ENCODE measurements at regions of chr3 and their contacts with region 1.

Region 1: GRCh38 chr3:48918388-48919214 is at the start of gene ARIH2:
- DNase-seq: peak; percentile 82 to 89 (median 88)
- ATAC-seq: peak; percentile 88
- H3K4me3 ChIP-seq: peak within 1 kb of the TSS; percentile 94
- H3K4me3 Mint-ChIP-seq: peak within 1 kb of the TSS; percentile 89 to 98 (median 96)
- H3K27ac ChIP-seq: peak within 1 kb of the TSS; percentile 98
- H3K27ac Mint-ChIP-seq: peak within 1 kb of the TSS; percentile 96 to 100 (median 99)
- H3K4me1 ChIP-seq: peaks cover 12 to 16% of the 10 kb centered on the region in 2 donors
- H3K4me1 Mint-ChIP-seq: peaks cover 7 to 31% (median 27%) of the 10 kb centered on the region in 7 donors
- H3K27me3 ChIP-seq: no peaks in the 10 kb centered on the region
- H3K27me3 Mint-ChIP-seq: no peaks in the 10 kb centered on the region
- total RNA-seq, gene ARIH2: 103 to 189 (median 150) TPM

Region 2: GRCh38 chr3:48188266-48189201 is 730.1 kb before region 1 on chr3 and contains the start of gene CDC25A:
- CTCF ChIA-PET with region 1: no interaction called
- POLR2A ChIA-PET with region 1: no interaction called
- intact Hi-C with region 1: loop called in 1 of 2 experiments (anchors 5 kb)
- DNase-seq: peak; percentile 69 to 94 (median 87)
- ATAC-seq: peak; percentile 100
- H3K4me3 ChIP-seq: peak within 1 kb of the TSS; percentile 88
- H3K4me3 Mint-ChIP-seq: peak within 1 kb of the TSS; percentile 89 to 96 (median 94)
- H3K27ac ChIP-seq: peak within 1 kb of the TSS; percentile 57
- H3K27ac Mint-ChIP-seq: peak within 1 kb of the TSS in 8 of 9 donors; percentile 8 to 84 (median 66)
- H3K4me1 ChIP-seq: peaks cover 4 to 6% of the 10 kb centered on the region in 2 donors
- H3K4me1 Mint-ChIP-seq: peaks cover 6 to 36% (median 13%) of the 10 kb centered on the region in 7 donors
- H3K27me3 ChIP-seq: no peaks in the 10 kb centered on the region
- H3K27me3 Mint-ChIP-seq: peaks cover 0 to 21% (median 14%) of the 10 kb centered on the region in 5 donors
- total RNA-seq, gene CDC25A: 0.61 to 20.7 TPM in 2 of 5 experiments, not detected in the others

Region 3: DNA sequence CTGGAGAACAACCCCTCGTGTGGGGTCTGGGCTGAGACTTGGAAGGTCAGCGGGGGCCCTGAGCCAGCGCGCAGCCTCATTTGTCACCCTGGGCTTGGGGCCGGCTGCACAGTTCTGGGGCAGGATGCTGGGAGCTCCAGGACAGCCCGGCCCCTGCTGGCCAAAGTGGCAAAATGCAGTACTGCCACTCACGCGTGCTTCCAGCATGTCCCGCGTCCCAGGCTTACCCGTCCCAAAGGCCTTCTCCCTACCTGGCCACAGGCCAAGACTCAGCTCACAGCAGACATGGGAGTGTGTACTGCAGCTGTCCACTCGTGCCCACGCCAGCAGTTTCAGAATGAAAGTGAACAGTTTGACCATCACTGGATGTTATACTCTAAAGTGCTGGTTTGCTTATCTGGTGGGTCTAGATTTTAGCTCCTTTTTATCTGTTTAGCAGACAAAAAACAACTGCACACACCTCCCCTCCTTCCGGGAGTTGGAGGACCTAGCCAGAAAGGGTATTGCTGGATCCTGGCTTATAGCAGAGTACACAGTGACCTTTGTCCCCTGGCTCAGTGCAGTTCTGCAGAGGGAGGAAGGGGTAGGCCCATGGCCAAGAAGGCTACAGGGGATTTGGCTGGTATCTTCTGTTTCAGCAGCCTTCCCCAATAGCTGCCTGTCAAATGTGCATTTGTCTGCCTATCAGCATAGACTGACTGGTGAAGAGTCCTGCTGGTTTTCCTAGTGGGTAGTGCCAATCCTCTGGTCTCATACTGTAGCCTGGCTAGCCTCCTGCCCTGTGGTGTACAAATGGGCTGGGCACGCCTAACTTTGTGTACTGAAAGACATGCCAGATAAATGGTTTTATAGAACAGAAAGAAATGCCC is 178.4 kb before region 1 on chr3:
- CTCF ChIA-PET with region 1: no interaction called
- POLR2A ChIA-PET with region 1: interaction called, 3 read pairs
- intact Hi-C with region 1: loop called in 1 of 2 experiments (anchors 1 kb)
- DNase-seq: peak; percentile 8 to 55 (median 35)
- ATAC-seq: peak; percentile 90
- H3K4me3 ChIP-seq: no peak overlapping the region
- H3K4me3 Mint-ChIP-seq: no peak overlapping the region
- H3K27ac ChIP-seq: no peak overlapping the region
- H3K27ac Mint-ChIP-seq: peak overlapping the region in 2 of 9 donors; percentile 1 to 6
- H3K4me1 ChIP-seq: no peaks in the 10 kb centered on the region
- H3K4me1 Mint-ChIP-seq: peaks cover 0 to 9% (median 0%) of the 10 kb centered on the region in 7 donors
- H3K27me3 ChIP-seq: no peaks in the 10 kb centered on the region
- H3K27me3 Mint-ChIP-seq: no peaks in the 10 kb centered on the region

Region 4: GRCh38 chr3:48898383-48899234 is 20.0 kb before region 1 on chr3 and contains the start of gene SLC25A20:
- CTCF ChIA-PET with region 1: interaction called, 15 read pairs
- POLR2A ChIA-PET with region 1: interaction called, 39 read pairs
- intact Hi-C with region 1: loop called (anchors 1 kb)
- DNase-seq: peak; percentile 78 to 95 (median 85)
- ATAC-seq: peak; percentile 98
- H3K4me3 ChIP-seq: peak within 1 kb of the TSS; percentile 91
- H3K4me3 Mint-ChIP-seq: peak within 1 kb of the TSS; percentile 89 to 99 (median 94)
- H3K27ac ChIP-seq: peak within 1 kb of the TSS; percentile 76
- H3K27ac Mint-ChIP-seq: peak within 1 kb of the TSS; percentile 83 to 99 (median 93)
- H3K4me1 ChIP-seq: peaks cover 21 to 23% of the 10 kb centered on the region in 2 donors
- H3K4me1 Mint-ChIP-seq: peaks cover 27 to 51% (median 41%) of the 10 kb centered on the region in 7 donors
- H3K27me3 ChIP-seq: no peaks in the 10 kb centered on the region
- H3K27me3 Mint-ChIP-seq: no peaks in the 10 kb centered on the region
- total RNA-seq, gene SLC25A20: 6.6 to 27.3 (median 12.8) TPM

Region 5: DNA sequence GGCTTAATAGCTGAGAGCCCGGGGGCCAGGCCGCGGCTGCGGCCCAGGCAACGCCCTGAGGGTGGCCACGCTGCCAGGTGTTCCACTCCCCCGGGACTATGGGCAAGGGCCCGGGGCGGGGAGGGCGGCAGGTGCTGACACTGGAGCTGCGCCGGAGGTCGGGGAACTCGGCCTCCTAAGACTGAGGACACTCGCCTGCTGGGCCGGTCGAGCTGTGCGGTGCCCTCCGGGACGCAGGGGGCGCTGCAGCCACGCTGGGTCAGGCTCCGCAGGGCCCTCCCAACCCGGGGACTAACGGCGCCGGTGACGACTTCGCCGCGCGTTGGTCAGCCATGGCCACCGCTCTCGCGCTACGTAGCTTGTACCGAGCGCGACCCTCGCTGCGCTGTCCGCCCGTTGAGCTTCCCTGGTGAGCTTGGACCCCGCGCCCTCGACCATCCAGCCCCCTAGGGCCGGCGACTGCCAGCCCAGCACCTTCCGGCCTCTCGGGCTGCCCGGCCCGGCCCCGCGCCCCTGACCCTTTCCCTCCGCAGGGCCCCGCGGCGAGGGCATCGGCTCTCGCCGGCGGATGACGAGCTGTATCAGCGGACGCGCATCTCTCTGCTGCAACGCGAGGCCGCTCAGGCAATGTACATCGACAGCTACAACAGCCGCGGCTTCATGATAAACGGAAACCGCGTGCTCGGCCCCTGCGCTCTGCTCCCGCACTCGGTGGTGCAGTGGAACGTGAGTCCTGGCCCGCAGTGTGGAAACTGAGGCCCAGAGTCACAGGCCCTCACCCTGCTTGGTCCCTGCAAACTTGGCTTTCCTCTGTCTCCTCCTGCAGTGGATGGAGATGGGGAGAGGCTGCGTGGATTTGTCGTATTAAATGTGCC is 103.4 kb after region 1 on chr3 and contains the start of gene NDUFAF3:
- CTCF ChIA-PET with region 1: no interaction called
- POLR2A ChIA-PET with region 1: interaction called, 10 read pairs
- intact Hi-C with region 1: loop called in 1 of 2 experiments (anchors 2 kb)
- DNase-seq: peak; percentile 84 to 96 (median 89)
- ATAC-seq: peak; percentile 89
- H3K4me3 ChIP-seq: peak within 1 kb of the TSS; percentile 99
- H3K4me3 Mint-ChIP-seq: peak within 1 kb of the TSS; percentile 92 to 99 (median 97)
- H3K27ac ChIP-seq: peak within 1 kb of the TSS; percentile 98
- H3K27ac Mint-ChIP-seq: peak within 1 kb of the TSS; percentile 95 to 99 (median 98)
- H3K4me1 ChIP-seq: peaks cover 24 to 25% of the 10 kb centered on the region in 2 donors
- H3K4me1 Mint-ChIP-seq: peaks cover 21 to 61% (median 47%) of the 10 kb centered on the region in 7 donors
- H3K27me3 ChIP-seq: no peaks in the 10 kb centered on the region
- H3K27me3 Mint-ChIP-seq: peaks cover 0 to 2% (median 0%) of the 10 kb centered on the region in 5 donors
- total RNA-seq, gene NDUFAF3: 63.8 to 110 (median 89.3) TPM

Region 6: DNA sequence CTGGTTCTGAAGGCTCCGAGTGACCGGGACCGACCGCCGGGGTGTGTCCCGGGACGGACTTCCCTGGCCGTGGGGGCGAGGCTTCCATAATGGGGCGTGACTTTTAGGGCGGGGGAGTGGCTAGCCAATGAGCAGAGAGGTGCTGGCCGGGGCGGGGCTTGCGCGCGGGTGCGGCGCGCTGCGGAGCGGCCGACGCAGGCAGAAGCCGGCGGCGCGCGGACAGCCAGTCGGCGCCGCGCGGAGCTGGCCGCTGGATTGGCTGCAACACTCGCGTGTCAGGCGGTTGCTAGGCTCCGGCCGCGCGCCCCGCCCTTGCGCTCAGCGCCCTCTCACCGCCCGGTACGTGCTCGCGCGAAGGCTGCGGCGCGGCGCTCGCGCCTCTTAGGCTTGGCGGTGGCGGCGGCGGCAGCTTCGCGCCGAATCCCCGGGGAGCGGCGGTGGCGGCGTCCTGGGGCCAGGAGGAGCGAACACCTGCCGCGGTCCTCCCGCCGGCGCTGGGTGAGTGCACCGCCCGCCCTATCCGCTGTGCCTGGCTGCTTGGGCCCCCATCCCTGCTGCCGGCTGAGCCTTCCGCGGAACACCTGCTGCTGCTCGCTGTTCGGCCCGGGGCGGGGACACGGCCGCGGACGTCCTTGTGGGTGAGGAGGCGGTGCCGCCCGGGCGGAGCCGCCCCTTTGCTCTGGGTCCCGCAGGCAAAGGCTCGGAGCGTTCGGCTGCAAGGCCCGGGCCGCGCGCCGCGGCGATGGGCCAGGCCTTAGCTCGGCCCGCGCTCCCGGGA is 551.5 kb after region 1 on chr3 and contains the start of gene DAG1:
- CTCF ChIA-PET with region 1: no interaction called
- POLR2A ChIA-PET with region 1: no interaction called
- intact Hi-C with region 1: loop called in 1 of 2 experiments (anchors 5 kb)
- DNase-seq: peak; percentile 90 to 98 (median 95)
- ATAC-seq: peak; percentile 91
- H3K4me3 ChIP-seq: peak within 1 kb of the TSS; percentile 92
- H3K4me3 Mint-ChIP-seq: peak within 1 kb of the TSS; percentile 87 to 97 (median 92)
- H3K27ac ChIP-seq: peak within 1 kb of the TSS; percentile 94
- H3K27ac Mint-ChIP-seq: peak within 1 kb of the TSS; percentile 89 to 95 (median 93)
- H3K4me1 ChIP-seq: peaks cover 15 to 20% of the 10 kb centered on the region in 2 donors
- H3K4me1 Mint-ChIP-seq: peaks cover 14 to 27% (median 22%) of the 10 kb centered on the region in 7 donors
- H3K27me3 ChIP-seq: no peaks in the 10 kb centered on the region
- H3K27me3 Mint-ChIP-seq: no peaks in the 10 kb centered on the region
- total RNA-seq, gene DAG1: 12.0 to 22.3 (median 20.1) TPM